ENCODE measurements at regions of chr19 and their contacts with region 1.

Region 1: GRCh38 chr19:33905937-33906576 is 109.4 kb downstream of the KCTD15 start:
- DNase-seq: peak; percentile 88 to 91 (median 89)
- ATAC-seq: peak; percentile 94
- H3K4me3 ChIP-seq: peak overlapping the region; percentile 3
- H3K4me1 ChIP-seq: peaks cover 3% of the 10 kb centered on the region
- CTCF ChIP-seq: no peak

Region 2: GRCh38 chr19:33795370-33796163 is 110.5 kb before region 1 on chr19:
- intact Hi-C with region 1: loop called in 1 of 2 experiments (anchors 10 kb)
- DNase-seq: peak; percentile 81 to 89 (median 83)
- ATAC-seq: peak; percentile 89
- H3K4me3 ChIP-seq: peak overlapping the region; percentile 50
- H3K4me1 ChIP-seq: peaks cover 11% of the 10 kb centered on the region
- CTCF ChIP-seq: peak; percentile 74

Region 3: GRCh38 chr19:33971073-33971472 is 65.0 kb after region 1 on chr19:
- intact Hi-C with region 1: no loop called
- DNase-seq: no peak
- ATAC-seq: no peak
- H3K4me3 ChIP-seq: no peak overlapping the region
- H3K4me1 ChIP-seq: no peaks in the 10 kb centered on the region
- CTCF ChIP-seq: no peak

Measured in mucosa of descending colon (tissue), 3 donors.